HEK293T (cell line): ENCODE measurements at regions of chr6 and their contacts with region 1.

Region 1: GRCh38 chr6:44074439-44075136 is 52.7 kb downstream of the MRPL14 start:
- DNase-seq: peak; percentile 77

Region 2: DNA sequence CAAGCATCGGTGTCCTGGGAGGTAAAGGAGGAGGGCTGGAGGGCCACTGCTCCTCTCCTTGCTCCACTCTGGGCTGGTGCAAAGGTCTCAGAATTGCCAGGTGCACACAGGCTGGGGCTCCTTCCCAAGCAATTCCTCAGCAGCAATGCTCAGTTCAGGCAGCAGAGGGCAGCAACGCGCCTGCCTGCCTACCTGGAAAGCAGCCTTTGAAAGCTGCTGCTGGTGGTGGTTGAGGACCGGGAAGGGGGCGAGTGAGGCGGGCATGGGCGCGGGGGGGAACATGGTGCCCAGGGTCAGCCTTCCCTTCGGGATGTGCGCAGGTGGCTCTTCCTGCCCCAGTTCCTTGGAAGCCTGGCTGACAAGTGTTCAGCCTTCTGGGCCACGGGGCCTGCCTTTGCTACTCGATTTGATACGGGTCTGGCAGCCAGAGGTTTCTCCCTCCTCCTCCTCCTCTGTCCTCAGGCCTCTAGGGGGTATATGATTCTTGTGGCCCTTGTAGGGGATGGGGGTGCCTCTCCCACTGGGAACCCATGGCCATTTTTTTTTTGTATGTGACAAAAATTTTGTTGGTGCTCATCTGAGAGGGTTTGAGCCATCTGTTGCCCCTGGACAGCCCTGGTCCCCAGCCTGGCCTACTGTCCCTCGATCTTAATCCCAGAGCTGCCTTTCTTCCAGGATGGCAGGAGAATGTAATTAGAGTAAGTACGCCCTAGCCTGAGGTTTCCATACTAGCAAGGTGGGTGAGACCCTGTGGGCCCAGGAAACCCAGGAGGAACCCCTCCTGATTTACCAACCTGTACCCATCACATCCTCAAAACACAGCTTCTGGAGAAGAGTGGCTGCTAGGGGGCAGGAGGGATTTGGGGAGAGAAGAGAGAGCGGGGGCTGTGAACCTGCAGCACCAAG is 407.1 kb before region 1 on chr6:
- CTCF ChIA-PET with region 1: interaction called, 14 read pairs
- POLR2A ChIA-PET with region 1: no interaction called
- DNase-seq: peak; percentile 86

Region 3: GRCh38 chr6:43769526-43770416 is 304.8 kb before region 1 on chr6 and contains the start of gene VEGFA:
- CTCF ChIA-PET with region 1: interaction called, 22 read pairs
- POLR2A ChIA-PET with region 1: interaction called, 19 read pairs
- DNase-seq: peak; percentile 90

Region 4: GRCh38 chr6:43972179-43972912 is 102.2 kb before region 1 on chr6:
- CTCF ChIA-PET with region 1: no interaction called
- POLR2A ChIA-PET with region 1: no interaction called
- DNase-seq: no peak

Region 5: GRCh38 chr6:44127186-44128019 is 52.8 kb after region 1 on chr6 and contains the starts of genes MRPL14 and TMEM63B:
- CTCF ChIA-PET with region 1: no interaction called
- POLR2A ChIA-PET with region 1: no interaction called
- DNase-seq: peak; percentile 98